Posterior vena cava (tissue), 2 donors: ENCODE measurements at regions of chr18 and their contacts with region 1.

Region 1: DNA sequence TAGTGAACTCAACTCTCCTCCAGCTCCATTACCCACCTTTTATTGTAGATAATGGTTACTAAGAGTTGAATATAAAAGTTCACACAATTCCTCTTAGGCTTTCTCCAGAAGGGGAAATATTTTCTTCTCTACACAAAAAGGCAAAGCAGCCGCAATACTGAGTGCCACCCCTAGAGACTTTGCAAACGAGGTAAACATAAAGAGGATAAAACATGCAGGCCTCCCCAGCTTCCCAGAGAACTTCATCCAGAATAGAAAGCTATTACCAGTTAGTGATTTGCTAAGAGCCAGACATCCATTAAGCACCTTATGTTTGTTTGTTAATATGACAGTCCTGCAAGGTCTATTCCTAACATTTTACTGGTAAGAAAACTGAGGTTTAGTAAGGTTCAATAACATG is 17.4 kb downstream of the ZNF521 start:
- DNase-seq: no peak

Region 2: GRCh38 chr18:24170389-24170788 is 1164.2 kb before region 1 on chr18:
- intact Hi-C with region 1: loop called in 1 of 2 experiments (anchors 5 kb)
- DNase-seq: no peak

Region 3: GRCh38 chr18:27030416-27030815 is 1695.8 kb after region 1 on chr18:
- intact Hi-C with region 1: no loop called
- DNase-seq: no peak